ENCODE measurements at regions of chr12 and their contacts with region 1.

Region 1: GRCh38 chr12:79737875-79738718 is 47.3 kb upstream of the PAWR start:
- DNase-seq: peak; percentile 43
- H3K4me3 Mint-ChIP-seq: no peak overlapping the region
- H3K27ac Mint-ChIP-seq: no peak overlapping the region
- H3K4me1 Mint-ChIP-seq: no peaks in the 10 kb centered on the region
- H3K27me3 Mint-ChIP-seq: peaks cover 9% of the 10 kb centered on the region

Region 2: DNA sequence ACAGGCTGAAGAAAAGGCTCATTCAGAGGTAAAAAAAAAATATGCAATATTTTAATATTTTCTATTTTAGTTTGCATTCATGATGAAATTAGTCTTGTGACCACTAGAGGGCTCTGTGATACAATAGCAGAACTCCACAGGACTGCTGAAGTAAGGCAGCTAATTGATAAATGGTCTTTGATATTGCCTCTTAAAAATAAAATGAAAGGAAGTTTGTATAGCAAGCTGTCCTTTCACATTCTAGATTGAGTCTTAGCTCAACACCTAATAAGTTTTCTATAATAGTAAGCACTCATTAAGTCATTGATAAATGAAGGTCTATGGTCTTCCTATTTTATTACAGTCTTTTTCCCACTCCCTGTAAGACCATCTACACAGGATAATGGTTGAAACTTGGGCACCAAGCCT is 1591.7 kb before region 1 on chr12:
- CTCF ChIA-PET with region 1: no interaction called
- intact Hi-C with region 1: loop called (anchors 5 kb)
- DNase-seq: no peak
- H3K4me3 Mint-ChIP-seq: no peak overlapping the region
- H3K27ac Mint-ChIP-seq: no peak overlapping the region
- H3K4me1 Mint-ChIP-seq: no peaks in the 10 kb centered on the region
- H3K27me3 Mint-ChIP-seq: no peaks in the 10 kb centered on the region

Region 3: GRCh38 chr12:79407671-79408622 is 330.1 kb before region 1 on chr12:
- CTCF ChIA-PET with region 1: no interaction called
- intact Hi-C with region 1: loop called (anchors 5 kb)
- DNase-seq: peak; percentile 30
- H3K4me3 Mint-ChIP-seq: no peak overlapping the region
- H3K27ac Mint-ChIP-seq: no peak overlapping the region
- H3K4me1 Mint-ChIP-seq: no peaks in the 10 kb centered on the region
- H3K27me3 Mint-ChIP-seq: no peaks in the 10 kb centered on the region

Region 4: DNA sequence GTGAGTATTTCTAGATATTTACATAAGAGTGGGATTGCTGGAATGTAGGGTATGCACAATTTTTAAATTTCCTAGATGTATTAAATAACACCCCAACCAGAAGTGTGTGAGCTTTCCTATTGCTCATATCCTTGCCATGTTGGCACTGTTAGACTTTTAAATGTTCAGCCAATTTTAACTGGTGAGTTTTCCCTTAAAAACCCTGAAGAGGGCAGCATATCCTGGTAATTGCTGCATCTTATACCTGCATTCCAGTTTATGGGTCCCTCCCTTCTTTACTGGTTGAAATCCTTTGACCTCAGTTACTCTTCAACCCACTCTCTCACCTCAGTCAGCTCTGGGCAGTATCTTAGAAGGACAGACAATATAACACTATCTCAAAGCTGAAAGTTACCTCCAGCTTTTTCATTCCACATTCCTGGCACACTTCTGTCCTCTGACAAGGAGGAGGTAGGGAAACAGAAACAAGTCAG is 317.9 kb before region 1 on chr12:
- CTCF ChIA-PET with region 1: no interaction called
- intact Hi-C with region 1: loop called (anchors 5 kb)
- DNase-seq: no peak
- H3K4me3 Mint-ChIP-seq: no peak overlapping the region
- H3K27ac Mint-ChIP-seq: no peak overlapping the region
- H3K4me1 Mint-ChIP-seq: no peaks in the 10 kb centered on the region
- H3K27me3 Mint-ChIP-seq: no peaks in the 10 kb centered on the region

Region 5: GRCh38 chr12:79547735-79548609 is 190.1 kb before region 1 on chr12:
- CTCF ChIA-PET with region 1: no interaction called
- intact Hi-C with region 1: loop called (anchors 1 kb)
- DNase-seq: peak; percentile 45
- H3K4me3 Mint-ChIP-seq: no peak overlapping the region
- H3K27ac Mint-ChIP-seq: no peak overlapping the region
- H3K4me1 Mint-ChIP-seq: no peaks in the 10 kb centered on the region
- H3K27me3 Mint-ChIP-seq: no peaks in the 10 kb centered on the region

Region 6: GRCh38 chr12:79555028-79555930 is 182.8 kb before region 1 on chr12:
- CTCF ChIA-PET with region 1: interaction called, 3 read pairs
- intact Hi-C with region 1: loop called (anchors 1 kb)
- DNase-seq: peak; percentile 11
- H3K4me3 Mint-ChIP-seq: no peak overlapping the region
- H3K27ac Mint-ChIP-seq: no peak overlapping the region
- H3K4me1 Mint-ChIP-seq: no peaks in the 10 kb centered on the region
- H3K27me3 Mint-ChIP-seq: no peaks in the 10 kb centered on the region

Measured in activated naive CD4-positive, alpha-beta T cell treated with anti-CD3 and anti-CD28 coated beads for 36 hours (primary cell).